ENCODE measurements at regions of chr6 and their contacts with region 1.

Region 1: DNA sequence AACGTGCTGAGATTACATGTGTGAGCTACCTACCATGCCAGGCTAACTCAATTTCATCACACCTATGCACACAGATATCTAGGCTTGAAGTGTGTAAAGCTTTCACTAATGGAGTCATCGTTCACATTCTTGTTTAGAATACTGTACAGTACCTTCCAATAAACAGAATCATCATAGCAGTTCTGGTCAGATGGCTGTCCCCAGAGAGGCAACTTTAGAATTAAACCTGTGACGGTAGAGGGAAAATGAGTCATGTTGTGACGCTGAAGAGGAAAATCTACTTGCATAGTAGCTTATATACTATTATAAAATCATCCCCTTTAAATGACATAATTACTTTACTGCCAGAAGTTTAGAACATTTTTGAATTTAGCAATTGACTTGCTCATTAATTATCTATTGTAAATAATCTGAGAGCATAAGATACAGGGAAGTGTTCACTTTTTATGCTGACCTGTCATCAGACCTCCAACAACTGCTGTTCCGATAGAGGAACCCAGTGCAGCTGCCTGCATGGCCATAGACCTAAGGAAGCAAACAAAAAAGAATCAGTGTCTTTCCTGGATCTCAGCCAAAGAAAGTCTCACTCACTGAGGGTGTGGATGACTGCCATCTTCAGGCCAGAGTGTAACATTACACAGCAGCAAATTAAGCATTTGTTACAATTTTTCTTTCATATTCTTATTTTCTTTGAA is 29.8 kb downstream of the RHAG start:
- DNase-seq: peak; percentile 76 to 86 (median 81)
- ATAC-seq: peak; percentile 71
- H3K4me3 ChIP-seq: no peak overlapping the region
- H3K27ac ChIP-seq: no peak overlapping the region
- H3K4me1 ChIP-seq: no peaks in the 10 kb centered on the region
- H3K27me3 ChIP-seq: no peaks in the 10 kb centered on the region
- CTCF ChIP-seq: peak; percentile 86 to 88 (median 88)
- EP300 ChIP-seq: no peak
- POLR2A ChIP-seq: no peak
- RAD21 ChIP-seq: peak; percentile 83 to 91

Region 2: GRCh38 chr6:49462927-49463611 is 143.8 kb before region 1 on chr6 and contains the starts of genes CENPQ and MMUT:
- CTCF ChIA-PET with region 1: no interaction called
- POLR2A ChIA-PET with region 1: no interaction called
- in situ Hi-C with region 1: no loop called
- intact Hi-C with region 1: loop called (anchors 5 kb)
- DNase-seq: peak; percentile 97 to 99 (median 97)
- ATAC-seq: peak; percentile 99
- H3K4me3 ChIP-seq: peak within 1 kb of the TSS; percentile 74
- H3K27ac ChIP-seq: peak within 1 kb of the TSS; percentile 85
- H3K4me1 ChIP-seq: peaks cover 0 to 8% of the 10 kb centered on the region in 2 experiments; a peak in 2 of 5 replicates
- H3K27me3 ChIP-seq: no peaks in the 10 kb centered on the region
- CTCF ChIP-seq: no peak; a peak in 1 of 6 replicates
- EP300 ChIP-seq: peak; percentile 60
- POLR2A ChIP-seq: peak; percentile 93
- RAD21 ChIP-seq: no peak
- polyA plus RNA-seq, gene CENPQ: 39.5 to 48.3 TPM
- polyA plus RNA-seq, gene MMUT: 21.0 to 26.4 TPM

Region 3: DNA sequence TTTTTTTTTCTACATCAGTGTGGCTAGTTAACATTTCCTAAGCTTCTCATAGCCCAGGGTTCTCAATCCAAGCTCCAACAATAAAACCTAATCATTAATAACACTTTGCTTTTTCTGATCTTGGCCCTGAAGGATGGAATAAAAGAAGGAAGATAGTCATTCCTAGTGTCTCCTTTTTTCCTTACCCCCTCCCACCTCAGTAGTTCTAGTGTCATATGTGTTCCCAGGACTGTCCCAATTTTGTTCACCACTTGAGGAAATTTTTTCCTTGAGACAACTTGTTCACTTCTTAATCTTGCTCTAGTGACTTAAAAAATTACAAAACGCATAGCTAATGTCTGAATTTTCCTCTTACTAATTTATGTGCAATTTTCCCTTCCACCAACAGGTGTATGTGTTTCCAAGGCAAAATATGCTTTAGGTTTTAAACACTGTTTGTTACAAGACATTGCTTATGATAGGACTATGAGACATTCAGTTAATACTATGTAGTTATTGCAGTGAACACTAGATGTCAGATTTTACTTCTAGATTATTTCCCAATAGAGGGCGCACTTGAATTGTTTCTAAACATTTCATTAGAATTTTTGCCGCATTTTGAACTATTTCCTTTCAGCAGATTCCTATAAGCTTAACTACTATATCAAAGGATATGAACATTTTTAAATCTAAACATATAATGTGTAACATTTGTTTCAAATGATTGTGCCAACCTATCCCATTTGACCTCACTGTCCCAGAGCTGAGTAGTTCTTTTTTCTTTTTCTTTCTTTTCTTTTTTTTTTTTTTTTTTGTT is 74.9 kb before region 1 on chr6:
- CTCF ChIA-PET with region 1: interaction called, 68 read pairs
- POLR2A ChIA-PET with region 1: no interaction called
- in situ Hi-C with region 1: no loop called
- intact Hi-C with region 1: loop called (anchors 1 kb)
- DNase-seq: peak; percentile 55 to 72 (median 60)
- ATAC-seq: peak; percentile 95
- H3K4me3 ChIP-seq: no peak overlapping the region
- H3K27ac ChIP-seq: no peak overlapping the region; the same call in 2 of the 3 replicates
- H3K4me1 ChIP-seq: no peaks in the 10 kb centered on the region; a peak in 1 of 5 replicates
- H3K27me3 ChIP-seq: no peaks in the 10 kb centered on the region
- CTCF ChIP-seq: peak; percentile 79 to 100 (median 99)
- EP300 ChIP-seq: 0 out of 2 replicates have a peak, but pooled peaks have one; percentile 40
- POLR2A ChIP-seq: no peak
- RAD21 ChIP-seq: peak; percentile 98 to 99

Region 4: DNA sequence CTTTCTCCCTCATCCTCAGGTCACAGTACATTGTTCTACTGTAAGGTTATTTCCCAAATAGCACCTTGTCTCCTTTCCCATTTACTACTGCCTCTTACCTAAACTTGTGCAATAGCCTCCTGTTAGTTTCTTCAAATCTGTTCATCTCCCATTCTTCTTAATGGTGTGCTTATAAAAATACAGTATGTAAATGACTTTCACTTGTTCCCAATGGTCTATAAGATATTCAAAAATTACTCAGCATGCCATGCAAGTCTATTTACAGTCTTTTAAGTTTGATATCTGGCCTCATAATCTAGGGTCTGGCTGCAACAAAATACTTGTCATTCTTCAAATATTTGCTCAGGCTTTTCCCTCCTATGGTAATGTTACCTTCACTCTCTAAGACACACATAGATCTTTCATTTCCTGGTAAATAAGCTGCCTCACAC is 61.3 kb after region 1 on chr6:
- CTCF ChIA-PET with region 1: no interaction called
- POLR2A ChIA-PET with region 1: no interaction called
- in situ Hi-C with region 1: no loop called
- intact Hi-C with region 1: no loop called
- DNase-seq: no peak
- ATAC-seq: peak; percentile 10
- H3K4me3 ChIP-seq: no peak overlapping the region
- H3K27ac ChIP-seq: peak overlapping the region; percentile 12; the same call in 1 of the 3 replicates
- H3K4me1 ChIP-seq: peaks cover 6 to 23% of the 10 kb centered on the region in 2 experiments; a peak in 4 of 5 replicates
- H3K27me3 ChIP-seq: no peaks in the 10 kb centered on the region
- CTCF ChIP-seq: no peak
- EP300 ChIP-seq: no peak; the same call in 1 of the 2 replicates
- POLR2A ChIP-seq: no peak
- RAD21 ChIP-seq: no peak

Region 5: DNA sequence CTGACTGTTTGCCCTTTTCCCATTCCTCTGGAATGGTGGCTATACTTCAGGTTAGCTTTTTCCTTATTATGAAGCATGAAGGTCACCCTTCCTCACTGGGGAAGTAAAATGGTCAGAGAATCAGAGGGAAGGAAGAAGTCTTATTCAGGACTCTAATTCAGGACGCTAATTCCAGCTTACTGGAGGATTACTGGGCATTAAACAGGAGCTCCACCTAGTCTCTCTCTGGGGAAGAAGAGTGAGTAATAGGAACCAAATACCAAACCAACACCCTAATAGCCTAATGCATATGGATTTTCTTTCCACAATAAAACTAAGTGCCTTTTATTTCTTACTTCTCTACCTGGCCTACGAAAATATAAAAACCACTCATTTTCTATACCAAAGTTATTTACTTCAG is 249.4 kb after region 1 on chr6:
- CTCF ChIA-PET with region 1: no interaction called
- POLR2A ChIA-PET with region 1: no interaction called
- in situ Hi-C with region 1: no loop called
- intact Hi-C with region 1: no loop called
- DNase-seq: no peak
- ATAC-seq: no peak
- H3K4me3 ChIP-seq: no peak overlapping the region
- H3K27ac ChIP-seq: no peak overlapping the region
- H3K4me1 ChIP-seq: peaks cover 0 to 7% of the 10 kb centered on the region in 2 experiments; a peak in 1 of 5 replicates
- H3K27me3 ChIP-seq: no peaks in the 10 kb centered on the region
- CTCF ChIP-seq: no peak
- EP300 ChIP-seq: no peak
- POLR2A ChIP-seq: no peak
- RAD21 ChIP-seq: no peak